Caco-2 (cell line): ENCODE measurements at regions of chr15 and their contacts with region 1.

Region 1: GRCh38 chr15:30956216-30956803 is 35.1 kb downstream of the MTMR10 start:
- DNase-seq: peak; percentile 75 to 78
- H3K4me3 ChIP-seq: no peak overlapping the region
- H3K4me3 Mint-ChIP-seq: peak overlapping the region; percentile 13
- H3K27ac Mint-ChIP-seq: peak overlapping the region; percentile 86
- H3K4me1 ChIP-seq: peaks cover 22% of the 10 kb centered on the region
- H3K4me1 Mint-ChIP-seq: peaks cover 17% of the 10 kb centered on the region
- H3K27me3 ChIP-seq: no peaks in the 10 kb centered on the region
- H3K27me3 Mint-ChIP-seq: no peaks in the 10 kb centered on the region
- CTCF ChIP-seq: no peak

Region 2: DNA sequence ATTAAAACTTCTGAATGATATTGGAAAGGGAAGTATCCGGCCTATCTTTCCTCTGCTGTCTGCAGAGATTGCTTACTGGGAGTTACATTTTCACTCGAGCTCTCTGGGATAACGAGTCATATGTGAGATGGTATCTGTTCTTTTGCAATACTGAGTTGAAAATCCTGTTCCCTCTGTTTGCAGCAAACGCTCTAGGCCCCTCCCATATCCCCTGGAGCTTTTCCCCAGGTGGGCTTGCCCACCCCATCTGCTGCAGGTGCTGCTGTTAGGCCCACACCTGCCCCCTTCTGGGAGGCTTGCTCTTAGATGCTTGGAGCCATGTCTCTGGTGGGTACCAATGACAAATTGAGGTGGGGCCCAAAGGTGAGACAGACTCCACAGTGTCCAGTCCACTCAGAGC is 77.8 kb after region 1 on chr15:
- CTCF ChIA-PET with region 1: no interaction called
- POLR2A ChIA-PET with region 1: no interaction called
- intact Hi-C with region 1: loop called (anchors 2 kb)
- DNase-seq: peak; percentile 83 to 86
- H3K4me3 ChIP-seq: no peak overlapping the region
- H3K4me3 Mint-ChIP-seq: no peak overlapping the region
- H3K27ac Mint-ChIP-seq: peak overlapping the region; percentile 29
- H3K4me1 ChIP-seq: peaks cover 18% of the 10 kb centered on the region
- H3K4me1 Mint-ChIP-seq: peaks cover 21% of the 10 kb centered on the region
- H3K27me3 ChIP-seq: no peaks in the 10 kb centered on the region
- H3K27me3 Mint-ChIP-seq: no peaks in the 10 kb centered on the region
- CTCF ChIP-seq: peak; percentile 39 to 43